ENCODE measurements at regions of chr17 and their contacts with region 1.

Region 1: GRCh38 chr17:41695954-41696756 is 7.5 kb downstream of the EIF1 start:
- DNase-seq: peak; percentile 64
- ATAC-seq: peak; percentile 12; the same call in 1 of the 2 replicates
- H3K4me3 Mint-ChIP-seq: no peak overlapping the region
- H3K27ac Mint-ChIP-seq: no peak overlapping the region
- H3K4me1 Mint-ChIP-seq: peaks cover 3% of the 10 kb centered on the region; the same call in 1 of the 2 replicates
- H3K27me3 Mint-ChIP-seq: peaks cover 25% of the 10 kb centered on the region
- CTCF ChIP-seq: peak; percentile 76

Region 2: GRCh38 chr17:41635121-41636097 is 60.7 kb before region 1 on chr17:
- CTCF ChIA-PET with region 1: no interaction called
- POLR2A ChIA-PET with region 1: no interaction called
- DNase-seq: no peak
- ATAC-seq: peak; percentile 62
- H3K4me3 Mint-ChIP-seq: no peak overlapping the region
- H3K27ac Mint-ChIP-seq: peak overlapping the region; percentile 84
- H3K4me1 Mint-ChIP-seq: peaks cover 10% of the 10 kb centered on the region
- H3K27me3 Mint-ChIP-seq: no peaks in the 10 kb centered on the region
- CTCF ChIP-seq: no peak

Region 3: DNA sequence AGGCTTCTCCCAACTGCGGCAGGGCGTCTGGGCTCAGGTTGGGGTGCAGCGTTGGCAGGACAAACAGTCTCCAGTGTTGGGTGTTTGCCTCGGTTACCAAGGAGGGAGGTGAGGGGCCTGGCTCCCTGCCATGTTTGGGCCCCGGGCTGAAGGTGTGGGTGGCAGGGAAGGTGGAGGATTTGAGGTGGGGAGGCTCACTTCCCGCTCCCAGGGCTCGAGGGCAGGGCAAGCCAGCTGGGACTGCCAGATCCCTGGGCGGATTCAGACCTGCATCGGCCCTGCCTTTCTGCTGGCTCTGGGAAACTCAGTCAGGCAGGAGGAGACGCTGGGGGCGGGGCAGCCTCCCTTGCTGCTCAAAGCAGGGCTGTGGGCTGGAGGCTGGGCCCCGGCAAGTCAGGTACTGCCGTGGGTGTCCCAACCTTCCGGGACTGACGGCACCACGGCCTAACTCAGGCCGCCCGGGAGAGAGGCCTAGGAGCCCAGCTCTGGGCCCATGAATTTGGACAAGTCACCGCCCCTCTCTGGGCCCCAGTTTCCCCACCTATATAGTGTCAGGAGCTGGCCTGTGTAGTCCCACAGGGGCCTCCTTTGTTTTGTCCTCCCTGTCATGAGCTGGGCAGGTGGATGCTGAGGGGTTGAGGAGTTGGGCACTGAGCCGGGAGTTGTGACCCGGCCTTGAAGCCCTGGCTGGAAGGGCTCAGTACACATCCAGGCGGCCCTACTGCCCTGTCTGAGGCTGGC is 40.4 kb before region 1 on chr17:
- CTCF ChIA-PET with region 1: no interaction called
- POLR2A ChIA-PET with region 1: no interaction called
- DNase-seq: peak; percentile 76
- ATAC-seq: peak; percentile 78
- H3K4me3 Mint-ChIP-seq: no peak overlapping the region
- H3K27ac Mint-ChIP-seq: no peak overlapping the region
- H3K4me1 Mint-ChIP-seq: peaks cover 11% of the 10 kb centered on the region
- H3K27me3 Mint-ChIP-seq: no peaks in the 10 kb centered on the region
- CTCF ChIP-seq: no peak

Region 4: DNA sequence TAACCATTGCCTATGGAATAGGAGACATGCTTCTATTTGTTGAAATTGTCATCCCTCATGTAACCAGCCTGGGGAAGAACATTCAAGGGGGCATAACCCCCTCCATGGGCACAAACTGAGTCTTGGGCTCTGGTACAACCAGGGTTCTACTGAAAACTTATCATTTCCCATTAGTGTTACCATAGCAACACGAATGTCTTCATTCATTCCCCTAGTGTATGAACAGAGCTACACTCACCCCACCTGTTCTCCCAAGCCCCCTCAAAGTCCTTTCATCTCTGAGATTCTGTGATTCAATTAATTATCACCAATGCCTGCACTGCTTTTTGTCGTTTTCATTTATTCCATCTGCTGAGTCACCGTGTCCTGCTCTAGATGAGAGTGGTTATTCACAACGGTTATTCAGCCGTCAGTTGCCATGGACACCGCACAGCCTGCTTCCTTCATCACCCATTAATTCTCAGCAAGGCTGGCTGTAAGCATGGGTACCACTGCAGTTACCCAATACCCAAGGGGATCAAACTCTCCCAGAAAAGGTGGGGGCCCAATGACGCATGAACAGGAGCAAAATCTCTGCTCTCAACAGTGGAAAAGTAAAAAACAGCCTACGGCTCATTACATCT is 14.4 kb after region 1 on chr17:
- CTCF ChIA-PET with region 1: interaction called, 75 read pairs
- POLR2A ChIA-PET with region 1: interaction called, 5 read pairs
- DNase-seq: no peak
- ATAC-seq: no peak
- H3K4me3 Mint-ChIP-seq: no peak overlapping the region
- H3K27ac Mint-ChIP-seq: no peak overlapping the region
- H3K4me1 Mint-ChIP-seq: peaks cover 15% of the 10 kb centered on the region
- H3K27me3 Mint-ChIP-seq: peaks cover 100% of the 10 kb centered on the region
- CTCF ChIP-seq: no peak

Region 5: DNA sequence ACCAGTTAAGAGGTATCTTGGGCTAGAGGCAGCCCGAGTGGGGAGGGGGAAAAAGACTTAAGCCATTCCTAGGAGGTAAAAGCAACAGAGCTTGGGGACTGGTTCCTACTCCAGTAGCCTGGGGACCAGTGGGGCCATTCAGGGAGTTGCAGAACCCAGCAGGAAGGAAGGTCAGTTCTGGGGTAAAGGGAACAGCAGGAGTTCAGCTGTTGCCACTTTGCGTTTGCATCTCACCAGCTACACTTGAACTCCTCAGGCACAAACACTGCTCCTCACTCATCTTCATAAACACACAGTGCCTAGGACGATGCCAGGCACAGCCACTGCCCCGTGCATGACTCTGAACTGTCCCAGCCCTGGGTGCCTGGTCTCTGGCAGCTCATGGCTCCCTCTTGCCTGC is 34.3 kb after region 1 on chr17:
- CTCF ChIA-PET with region 1: interaction called, 13 read pairs
- POLR2A ChIA-PET with region 1: no interaction called
- DNase-seq: no peak
- ATAC-seq: no peak
- H3K4me3 Mint-ChIP-seq: no peak overlapping the region
- H3K27ac Mint-ChIP-seq: no peak overlapping the region
- H3K4me1 Mint-ChIP-seq: peaks cover 7% of the 10 kb centered on the region; the same call in 1 of the 2 replicates
- H3K27me3 Mint-ChIP-seq: peaks cover 50% of the 10 kb centered on the region
- CTCF ChIP-seq: no peak

Region 6: DNA sequence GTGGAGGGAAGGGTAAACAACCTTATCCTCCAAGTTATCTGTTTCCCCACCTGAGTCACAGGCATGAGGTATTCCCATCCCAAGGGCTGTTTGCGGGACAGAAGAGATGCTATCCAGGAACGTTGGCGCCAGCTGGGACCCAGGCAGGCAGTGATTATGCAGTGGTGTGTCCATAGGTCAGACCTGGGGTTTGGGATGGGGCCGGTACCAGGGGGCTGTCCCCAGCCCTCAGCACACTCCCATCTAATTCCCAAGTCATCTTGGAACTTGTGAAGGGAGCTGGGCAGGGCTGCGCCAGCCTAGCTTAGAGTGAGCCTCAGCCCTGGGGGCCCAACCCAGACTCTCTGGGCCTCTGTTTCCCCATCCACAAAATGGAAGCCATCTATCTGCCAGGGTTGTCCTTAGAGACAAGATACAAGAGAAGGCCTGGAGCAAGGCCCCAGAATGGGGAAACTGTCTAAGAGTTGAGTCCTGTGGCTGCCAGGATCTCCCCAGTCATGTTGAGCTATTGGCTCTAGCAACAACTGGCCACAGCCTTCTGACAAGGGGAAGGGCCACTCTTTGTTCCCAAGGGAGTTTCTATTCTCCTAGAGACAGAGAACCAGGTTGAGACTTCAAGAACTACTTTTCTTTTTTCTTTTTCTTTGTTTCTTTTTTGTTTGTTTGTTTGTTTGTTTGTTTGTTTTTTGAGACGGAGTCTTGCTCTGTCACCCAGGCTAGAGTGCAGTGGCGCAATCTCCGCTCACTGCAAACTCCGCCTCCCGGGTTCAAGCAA is 100.2 kb after region 1 on chr17:
- CTCF ChIA-PET with region 1: interaction called, 10 read pairs
- POLR2A ChIA-PET with region 1: no interaction called
- DNase-seq: no peak
- ATAC-seq: no peak
- H3K4me3 Mint-ChIP-seq: no peak overlapping the region
- H3K27ac Mint-ChIP-seq: no peak overlapping the region
- H3K4me1 Mint-ChIP-seq: peaks cover 50% of the 10 kb centered on the region
- H3K27me3 Mint-ChIP-seq: peaks cover 46% of the 10 kb centered on the region
- CTCF ChIP-seq: no peak